Left lung (tissue), 14 donors: ENCODE measurements at regions of chr1 and their contacts with region 1.

Region 1: DNA sequence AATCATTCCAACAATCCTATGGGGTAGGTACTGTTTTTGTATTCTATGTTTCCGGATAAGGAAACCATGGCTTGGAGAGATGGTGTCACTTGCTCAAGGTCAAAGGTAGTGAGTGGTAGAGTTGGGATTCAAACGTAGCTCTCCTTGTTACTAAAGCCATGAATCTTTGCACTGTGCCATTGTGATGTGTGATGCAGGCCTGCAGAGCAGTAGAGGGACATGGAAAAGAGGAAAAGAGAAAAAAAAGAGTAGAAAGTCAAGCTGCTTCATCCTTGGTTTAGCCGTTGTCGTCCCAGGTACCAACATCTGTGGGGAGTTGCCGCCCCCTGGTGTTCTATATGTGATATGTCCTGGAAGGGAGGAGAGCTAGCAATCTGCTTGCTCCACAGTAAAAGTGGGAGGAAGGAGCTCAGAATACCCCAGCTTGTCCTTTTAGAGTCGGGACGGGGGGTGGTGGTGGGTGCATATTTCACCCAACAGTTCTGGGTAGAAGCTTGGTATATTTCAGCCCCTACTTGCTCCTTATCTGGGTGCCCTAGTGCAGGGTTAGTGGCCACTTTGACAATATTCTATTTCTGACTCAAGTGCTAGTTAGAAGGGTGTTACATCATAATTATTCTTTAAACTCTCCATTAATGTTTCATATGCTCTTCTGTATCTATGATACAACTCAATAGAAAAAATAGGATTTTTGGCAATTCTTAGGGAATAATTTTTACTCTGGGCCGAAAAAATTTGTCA is 98.4 kb downstream of the EBNA1BP2 start:
- DNase-seq: peak in 3 of 4 donors; percentile 67 to 88 (median 74)
- ATAC-seq: peak; percentile 98
- H3K4me3 ChIP-seq: no peak overlapping the region
- H3K27ac ChIP-seq: no peak overlapping the region
- H3K4me1 ChIP-seq: peaks cover 0 to under 1% of the 10 kb centered on the region in 2 donors
- H3K27me3 ChIP-seq: peaks cover 0 to 5% of the 10 kb centered on the region in 2 donors
- CTCF ChIP-seq: peak; percentile 65 to 89

Region 2: DNA sequence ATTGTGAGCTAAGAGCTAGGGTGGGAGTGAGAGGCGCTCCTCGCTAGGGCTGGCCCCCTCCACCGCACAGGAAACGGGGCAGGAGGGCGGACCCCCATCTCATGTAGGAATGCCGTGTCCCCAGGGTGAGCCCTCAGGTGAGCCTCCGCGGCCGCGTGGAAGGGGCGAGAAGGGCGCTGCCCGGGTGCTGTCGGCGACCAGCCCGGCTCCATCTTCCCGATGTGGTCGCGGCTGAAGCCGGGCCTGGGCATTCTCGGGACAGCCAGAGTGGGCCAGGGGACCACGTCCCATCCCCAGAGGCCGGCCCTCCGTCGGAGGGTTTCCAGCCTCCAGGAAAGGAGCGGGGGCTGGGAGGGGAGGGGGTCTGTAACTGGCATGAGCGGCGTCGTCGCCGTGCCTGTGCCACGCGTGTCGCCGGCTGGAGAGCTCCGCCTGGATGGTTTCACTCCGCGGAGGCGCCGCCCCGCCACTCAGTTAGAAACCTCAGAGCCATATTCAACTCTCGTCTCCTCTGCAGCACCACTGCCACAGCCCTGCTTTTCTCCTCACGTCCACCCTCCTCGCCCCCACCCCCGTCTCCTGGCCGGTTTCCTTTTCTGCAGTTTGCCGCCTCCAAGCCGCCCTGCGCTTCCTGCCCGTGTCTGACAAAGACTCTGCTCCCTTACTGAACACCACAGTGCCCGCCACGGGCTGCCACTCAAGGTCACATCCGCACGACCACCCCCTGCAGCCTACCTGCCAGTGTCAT is 288.5 kb before region 1 on chr1 and contains the start of gene TMEM269:
- intact Hi-C with region 1: loop called in 1 of 2 experiments (anchors 10 kb)
- DNase-seq: peak in 3 of 4 donors; percentile 19 to 80 (median 23)
- ATAC-seq: peak; percentile 72
- H3K4me3 ChIP-seq: peak within 1 kb of the TSS; percentile 28 to 32
- H3K27ac ChIP-seq: no peak within 1 kb of the TSS
- H3K4me1 ChIP-seq: peaks cover 0 to 11% of the 10 kb centered on the region in 2 donors
- H3K27me3 ChIP-seq: peaks cover 0 to 20% of the 10 kb centered on the region in 2 donors
- CTCF ChIP-seq: no peak
- polyA plus RNA-seq, gene TMEM269: 0.89 to 1.6 (median 1.4) TPM

Region 3: GRCh38 chr1:42913426-42914091 is 160.1 kb before region 1 on chr1:
- intact Hi-C with region 1: loop called (anchors 2 to 10 kb)
- DNase-seq: peak in 2 of 4 donors; percentile 54 to 78
- ATAC-seq: peak; percentile 95
- H3K4me3 ChIP-seq: no peak overlapping the region
- H3K27ac ChIP-seq: no peak overlapping the region
- H3K4me1 ChIP-seq: no peaks in the 10 kb centered on the region
- H3K27me3 ChIP-seq: no peaks in the 10 kb centered on the region
- CTCF ChIP-seq: peak; percentile 49 to 71

Region 4: DNA sequence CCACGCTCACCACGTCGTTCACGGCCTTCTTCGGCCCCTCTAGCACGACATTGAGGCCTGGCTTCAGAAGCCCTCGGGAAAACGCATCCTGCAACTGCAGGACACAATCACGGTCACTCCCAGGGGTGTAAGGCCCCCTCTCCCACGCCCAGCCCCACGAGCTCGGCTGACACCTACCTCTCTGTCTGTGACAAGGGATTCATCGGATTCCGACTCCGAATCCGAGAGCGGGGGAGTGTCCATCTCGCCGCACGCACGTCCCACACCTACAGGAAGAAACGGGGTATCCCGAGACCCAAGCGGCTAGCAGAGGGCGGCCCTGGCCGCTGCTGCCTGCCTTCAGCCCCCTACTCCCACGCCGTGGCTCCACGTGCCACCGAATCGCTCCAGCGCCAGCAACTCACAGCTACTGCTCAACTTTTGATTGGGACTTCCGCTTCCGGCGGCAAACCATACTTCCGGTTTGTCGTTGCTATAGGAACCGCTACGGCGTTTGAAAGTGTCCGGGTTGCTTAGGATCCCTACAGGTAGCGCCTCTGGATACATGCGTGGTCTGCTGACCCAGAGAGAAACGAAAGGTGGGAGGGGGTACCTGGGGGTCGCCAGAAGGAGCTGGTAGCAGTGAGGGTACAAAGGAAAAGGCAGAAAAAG is 98.3 kb after region 1 on chr1 and contains the starts of genes CFAP57 and EBNA1BP2:
- intact Hi-C with region 1: no loop called
- DNase-seq: peak; percentile 90 to 95 (median 93)
- ATAC-seq: peak; percentile 93
- H3K4me3 ChIP-seq: peak within 1 kb of the TSS; percentile 91 to 96
- H3K27ac ChIP-seq: peak within 1 kb of the TSS in 1 of 2 donors; percentile 59
- H3K4me1 ChIP-seq: peaks cover 5 to 23% of the 10 kb centered on the region in 2 donors
- H3K27me3 ChIP-seq: peaks cover 0 to 4% of the 10 kb centered on the region in 2 donors
- CTCF ChIP-seq: no peak
- polyA plus RNA-seq, gene CFAP57: 1.6 to 5.8 (median 4.6) TPM
- polyA plus RNA-seq, gene EBNA1BP2: 42.0 to 54.0 (median 51.2) TPM